ENCODE measurements at regions of chr16 and their contacts with region 1.

Region 1: GRCh38 chr16:20734056-20734455 is 7.6 kb downstream of the THUMPD1 start:
- DNase-seq: no peak
- H3K4me3 ChIP-seq: no peak overlapping the region
- H3K27ac ChIP-seq: no peak overlapping the region
- H3K4me1 ChIP-seq: no peaks in the 10 kb centered on the region
- H3K27me3 ChIP-seq: no peaks in the 10 kb centered on the region
- CTCF ChIP-seq: no peak

Region 2: DNA sequence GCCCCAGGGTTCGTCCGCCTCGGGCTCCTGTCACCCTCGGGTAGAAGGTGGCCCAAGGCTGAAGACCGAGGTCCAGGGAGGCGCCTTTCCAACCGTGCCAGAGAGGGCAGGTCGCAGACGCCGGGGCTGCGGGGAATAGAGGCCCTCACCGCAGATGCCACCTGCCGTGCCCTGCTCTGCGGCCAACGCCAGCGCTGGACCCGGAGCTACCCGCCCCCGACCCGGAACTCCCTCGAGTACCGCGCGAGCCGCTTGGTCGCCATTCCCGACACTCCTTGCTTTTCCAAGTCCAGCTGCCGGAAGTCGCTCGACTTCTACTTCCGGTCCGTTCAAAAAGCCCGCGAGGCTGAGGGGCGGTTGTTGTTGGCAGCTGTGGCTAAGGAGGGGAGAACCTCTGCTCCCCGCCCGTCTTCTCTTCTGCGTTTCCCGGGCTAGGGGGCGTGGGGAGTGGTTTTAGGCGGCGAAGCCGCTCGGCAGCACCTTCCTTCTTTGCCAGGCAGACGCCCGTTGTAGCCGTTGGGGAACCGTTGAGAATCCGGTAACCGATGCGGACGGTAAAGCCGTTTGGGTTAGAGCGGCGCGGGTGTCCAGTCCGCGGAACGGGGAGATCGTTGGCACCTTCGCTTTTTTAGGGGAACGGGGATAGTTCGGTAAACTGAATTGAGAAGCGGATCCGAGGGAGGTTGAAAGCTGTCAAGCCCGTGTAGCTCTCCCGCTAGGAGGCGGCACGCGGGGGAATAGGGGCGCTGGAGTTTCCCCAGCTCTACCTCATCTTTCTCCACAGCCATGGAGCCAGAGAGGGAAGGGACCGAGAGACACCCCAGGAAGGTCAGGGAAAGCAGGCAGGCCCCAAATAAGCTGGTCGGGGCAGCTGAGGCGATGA is 72.4 kb after region 1 on chr16 and contains the starts of genes ERI2 and REXO5:
- CTCF ChIA-PET with region 1: no interaction called
- POLR2A ChIA-PET with region 1: interaction called, 12 read pairs
- intact Hi-C with region 1: no loop called
- DNase-seq: peak; percentile 89 to 96
- H3K4me3 ChIP-seq: peak within 1 kb of the TSS; percentile 77
- H3K27ac ChIP-seq: peak within 1 kb of the TSS; percentile 47
- H3K4me1 ChIP-seq: peaks cover 10% of the 10 kb centered on the region; the same call in 1 of the 2 replicates
- H3K27me3 ChIP-seq: no peaks in the 10 kb centered on the region
- CTCF ChIP-seq: peak; percentile 53
- total RNA-seq, gene ERI2: 25.6 and 29.5 TPM in 2 replicates
- total RNA-seq, gene REXO5: 9.5 and 13.2 TPM in 2 replicates